Activated CD4-positive, alpha-beta memory T cell treated with anti-CD3 and anti-CD28 coated beads for 36 hours (primary cell): ENCODE measurements at regions of chr6 and their contacts with region 1.

Region 1: DNA sequence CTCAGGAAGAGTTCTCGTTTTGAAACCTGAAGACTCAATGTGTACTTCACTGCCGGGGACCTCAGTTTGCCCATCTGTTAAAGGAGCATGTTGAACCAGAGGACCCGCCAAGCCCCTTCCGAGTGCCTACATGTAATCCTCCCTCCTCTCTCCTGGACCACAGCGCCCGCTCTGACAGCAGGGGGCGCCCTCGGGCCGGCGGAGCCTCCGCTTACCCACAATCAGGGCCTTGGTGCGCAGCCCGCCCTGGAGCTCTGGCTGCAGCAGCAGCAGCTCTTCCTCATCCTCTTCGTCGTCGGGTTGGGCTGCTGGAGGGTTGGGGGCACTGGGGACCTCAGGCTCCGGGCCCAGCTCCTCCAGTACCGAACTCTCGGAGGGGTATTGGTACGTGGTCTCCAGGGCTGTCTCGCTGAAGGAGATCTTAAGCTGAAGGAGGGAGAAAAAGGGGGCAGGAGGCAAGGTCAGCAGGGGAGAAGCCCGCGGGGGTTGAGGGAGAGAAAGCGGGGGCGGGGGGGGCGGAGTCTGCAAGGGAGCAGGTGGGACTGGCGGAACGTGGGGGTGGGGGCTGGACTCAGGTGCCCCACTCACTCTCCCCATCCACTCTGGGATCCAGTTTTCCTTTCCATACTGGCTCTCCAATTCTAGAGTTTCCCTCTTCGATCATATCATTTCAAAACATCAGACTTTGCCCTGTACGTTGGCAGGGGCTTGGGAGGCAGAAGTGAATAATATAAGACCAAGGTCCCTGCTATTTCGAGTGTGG is 6.3 kb upstream of the DHX16 start:
- DNase-seq: peak; percentile 94
- H3K4me3 Mint-ChIP-seq: peak overlapping the region; percentile 100
- H3K27ac Mint-ChIP-seq: peak overlapping the region; percentile 99
- H3K4me1 Mint-ChIP-seq: peaks cover 16% of the 10 kb centered on the region
- H3K27me3 Mint-ChIP-seq: no peaks in the 10 kb centered on the region

Region 2: DNA sequence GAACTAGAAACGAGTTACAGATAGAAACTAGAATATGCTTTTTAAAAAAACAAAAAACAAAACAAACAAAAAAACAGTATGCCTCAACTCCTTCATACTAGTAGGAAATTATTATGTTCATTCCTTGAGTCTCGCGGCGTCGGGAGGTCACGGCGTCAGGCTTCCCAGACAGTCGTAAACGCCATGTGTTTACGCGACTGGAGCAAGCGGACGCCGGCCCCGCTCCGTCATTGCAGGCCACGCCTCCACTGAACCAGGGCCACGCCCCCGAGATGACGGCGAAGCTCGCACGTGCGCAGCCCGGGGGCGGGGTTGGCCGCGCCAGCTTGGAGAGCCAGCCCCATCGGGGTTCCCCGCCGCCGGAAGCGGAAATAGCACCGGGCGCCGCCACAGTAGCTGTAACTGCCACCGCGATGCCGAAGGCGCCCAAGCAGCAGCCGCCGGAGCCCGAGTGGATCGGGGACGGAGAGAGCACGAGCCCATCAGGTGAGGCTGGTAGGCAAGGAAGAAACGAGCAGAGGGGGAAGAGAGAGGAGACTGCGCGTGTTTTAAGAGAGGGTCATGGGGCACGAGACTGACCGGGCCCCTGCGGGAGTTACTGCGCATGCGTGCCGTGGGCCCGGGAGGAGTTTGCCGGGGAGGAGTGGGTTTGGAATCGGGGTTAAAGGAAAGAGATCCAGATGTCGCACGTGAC is 107.9 kb before region 1 on chr6 and contains the start of gene ABCF1:
- CTCF ChIA-PET with region 1: no interaction called
- POLR2A ChIA-PET with region 1: interaction called, 3 read pairs
- intact Hi-C with region 1: loop called (anchors 5 kb)
- DNase-seq: peak; percentile 99
- H3K4me3 Mint-ChIP-seq: peak within 1 kb of the TSS; percentile 94
- H3K27ac Mint-ChIP-seq: peak within 1 kb of the TSS; percentile 94
- H3K4me1 Mint-ChIP-seq: peaks cover 60% of the 10 kb centered on the region
- H3K27me3 Mint-ChIP-seq: no peaks in the 10 kb centered on the region
- total RNA-seq, gene ABCF1: 87.0 to 87.1 TPM

Region 3: GRCh38 chr6:30657454-30657853 is 21.7 kb before region 1 on chr6:
- CTCF ChIA-PET with region 1: no interaction called
- POLR2A ChIA-PET with region 1: no interaction called
- intact Hi-C with region 1: no loop called
- DNase-seq: no peak
- H3K4me3 Mint-ChIP-seq: no peak overlapping the region
- H3K27ac Mint-ChIP-seq: no peak overlapping the region
- H3K4me1 Mint-ChIP-seq: no peaks in the 10 kb centered on the region
- H3K27me3 Mint-ChIP-seq: no peaks in the 10 kb centered on the region

Region 4: GRCh38 chr6:30711758-30712380 is 32.7 kb after region 1 on chr6:
- CTCF ChIA-PET with region 1: interaction called, 628 read pairs
- POLR2A ChIA-PET with region 1: interaction called, 209 read pairs
- intact Hi-C with region 1: loop called (anchors 1 kb)
- DNase-seq: no peak
- H3K4me3 Mint-ChIP-seq: no peak overlapping the region
- H3K27ac Mint-ChIP-seq: no peak overlapping the region
- H3K4me1 Mint-ChIP-seq: peaks cover 31% of the 10 kb centered on the region
- H3K27me3 Mint-ChIP-seq: no peaks in the 10 kb centered on the region

Region 5: DNA sequence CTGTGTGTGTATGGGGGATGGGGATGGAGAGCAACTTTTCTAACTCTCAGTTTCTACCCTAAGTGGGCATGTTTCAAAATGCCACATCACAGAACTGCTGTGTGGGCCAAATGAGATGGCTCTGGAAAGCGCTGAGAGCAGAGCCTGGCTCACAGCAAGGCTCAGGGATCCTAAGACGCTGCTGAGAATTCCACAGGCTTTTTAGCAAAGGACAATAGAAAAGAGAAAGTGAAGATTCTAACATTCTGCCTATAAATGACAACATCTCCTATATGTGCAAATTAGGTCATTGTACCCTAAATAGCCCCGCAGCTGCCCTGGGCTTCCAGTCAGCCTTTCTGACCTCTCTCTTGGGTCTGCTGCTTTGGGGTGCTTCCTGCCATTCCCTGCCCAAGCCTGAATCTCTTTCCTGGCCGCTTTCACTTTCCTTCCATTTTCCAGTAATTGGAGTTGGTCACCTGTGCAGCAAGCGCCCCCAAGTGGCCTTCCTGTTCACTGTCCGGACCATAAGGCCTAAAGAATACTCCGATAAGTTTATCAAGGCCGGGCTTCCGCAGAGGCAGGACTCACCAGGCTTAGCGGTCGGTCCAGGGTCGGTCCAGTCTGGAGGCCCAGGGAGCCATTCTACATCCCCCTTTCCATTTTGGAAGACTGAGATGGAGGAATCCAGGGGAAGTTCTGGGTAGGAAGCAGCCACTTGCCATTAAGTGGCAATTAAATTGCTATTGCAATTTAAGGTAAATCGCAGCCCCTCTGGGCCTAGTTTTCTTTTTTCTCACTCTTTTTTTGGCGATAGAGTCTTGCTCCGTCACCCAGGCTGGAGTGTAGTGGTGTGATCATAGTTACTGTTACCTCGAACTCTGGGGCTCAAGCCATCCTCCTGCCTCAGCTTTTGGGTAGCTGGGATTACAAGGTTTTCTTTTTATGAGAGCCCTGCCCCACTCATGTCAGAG is 198.6 kb after region 1 on chr6:
- CTCF ChIA-PET with region 1: interaction called, 10 read pairs
- POLR2A ChIA-PET with region 1: interaction called, 3 read pairs
- intact Hi-C with region 1: loop called (anchors 2 kb)
- DNase-seq: peak; percentile 83
- H3K4me3 Mint-ChIP-seq: peak overlapping the region; percentile 62
- H3K27ac Mint-ChIP-seq: peak overlapping the region; percentile 78
- H3K4me1 Mint-ChIP-seq: peaks cover 20% of the 10 kb centered on the region
- H3K27me3 Mint-ChIP-seq: no peaks in the 10 kb centered on the region

Region 6: GRCh38 chr6:31502586-31502985 is 823.4 kb after region 1 on chr6:
- CTCF ChIA-PET with region 1: no interaction called
- POLR2A ChIA-PET with region 1: no interaction called
- intact Hi-C with region 1: no loop called
- DNase-seq: no peak
- H3K4me3 Mint-ChIP-seq: no peak overlapping the region
- H3K27ac Mint-ChIP-seq: no peak overlapping the region
- H3K4me1 Mint-ChIP-seq: peaks cover 51% of the 10 kb centered on the region
- H3K27me3 Mint-ChIP-seq: no peaks in the 10 kb centered on the region